ENCODE measurements at regions of chr1 and their contacts with region 1.

Region 1: DNA sequence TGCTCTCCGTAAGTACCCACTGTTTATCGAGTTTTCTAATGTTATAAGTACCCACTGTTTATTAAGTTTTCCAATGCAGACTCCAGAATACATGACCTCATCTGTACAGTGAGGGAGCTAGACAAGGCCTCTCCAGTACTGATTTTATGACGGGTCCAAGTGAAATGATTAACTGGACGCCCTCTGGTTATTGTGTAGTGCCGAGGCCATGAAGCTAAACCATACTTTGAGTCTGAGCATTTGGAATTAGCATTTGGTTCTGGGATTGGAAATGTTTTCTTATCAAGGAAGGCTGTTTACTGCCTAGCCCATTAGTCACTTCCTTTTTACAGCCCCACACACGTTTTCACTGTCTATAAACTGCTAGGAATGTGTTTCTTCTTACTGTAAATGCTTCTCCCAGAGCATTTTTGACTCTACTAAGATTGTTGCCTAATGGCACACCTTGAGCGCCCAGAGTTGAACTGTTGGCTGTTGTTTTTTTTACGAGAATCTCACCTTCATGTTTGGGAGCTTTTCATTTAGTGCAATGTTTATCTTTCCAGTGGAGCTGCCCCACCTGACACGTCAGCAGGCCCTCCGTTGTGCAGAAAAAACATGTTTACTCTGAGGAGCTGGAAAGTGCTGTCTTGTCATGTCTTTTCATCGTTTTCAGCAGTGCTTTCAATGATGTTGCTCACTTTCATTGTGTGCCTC is 26.9 kb downstream of the SPATA46 start:
- DNase-seq: peak; percentile 46 to 74
- H3K4me3 ChIP-seq: no peak overlapping the region
- H3K4me3 Mint-ChIP-seq: peak overlapping the region; percentile 33
- H3K27ac Mint-ChIP-seq: peak overlapping the region; percentile 74
- H3K4me1 ChIP-seq: peaks cover 56% of the 10 kb centered on the region
- H3K4me1 Mint-ChIP-seq: peaks cover 66% of the 10 kb centered on the region
- H3K27me3 ChIP-seq: no peaks in the 10 kb centered on the region
- H3K27me3 Mint-ChIP-seq: no peaks in the 10 kb centered on the region
- CTCF ChIP-seq: no peak

Region 2: GRCh38 chr1:162081316-162081715 is 268.5 kb before region 1 on chr1:
- CTCF ChIA-PET with region 1: no interaction called
- POLR2A ChIA-PET with region 1: no interaction called
- intact Hi-C with region 1: no loop called
- DNase-seq: no peak
- H3K4me3 ChIP-seq: no peak overlapping the region
- H3K4me3 Mint-ChIP-seq: no peak overlapping the region
- H3K27ac Mint-ChIP-seq: no peak overlapping the region
- H3K4me1 ChIP-seq: no peaks in the 10 kb centered on the region
- H3K4me1 Mint-ChIP-seq: peaks cover under 1% of the 10 kb centered on the region
- H3K27me3 ChIP-seq: no peaks in the 10 kb centered on the region
- H3K27me3 Mint-ChIP-seq: no peaks in the 10 kb centered on the region
- CTCF ChIP-seq: no peak

Region 3: GRCh38 chr1:162145280-162145965 is 204.4 kb before region 1 on chr1:
- CTCF ChIA-PET with region 1: no interaction called
- POLR2A ChIA-PET with region 1: no interaction called
- intact Hi-C with region 1: loop called (anchors 10 kb)
- DNase-seq: no peak
- H3K4me3 ChIP-seq: no peak overlapping the region
- H3K4me3 Mint-ChIP-seq: no peak overlapping the region
- H3K27ac Mint-ChIP-seq: no peak overlapping the region
- H3K4me1 ChIP-seq: peaks cover 27% of the 10 kb centered on the region
- H3K4me1 Mint-ChIP-seq: peaks cover 17% of the 10 kb centered on the region
- H3K27me3 ChIP-seq: no peaks in the 10 kb centered on the region
- H3K27me3 Mint-ChIP-seq: no peaks in the 10 kb centered on the region
- CTCF ChIP-seq: no peak

Region 4: GRCh38 chr1:162218975-162219374 is 130.8 kb before region 1 on chr1:
- CTCF ChIA-PET with region 1: no interaction called
- POLR2A ChIA-PET with region 1: no interaction called
- intact Hi-C with region 1: no loop called
- DNase-seq: no peak
- H3K4me3 ChIP-seq: no peak overlapping the region
- H3K4me3 Mint-ChIP-seq: no peak overlapping the region
- H3K27ac Mint-ChIP-seq: no peak overlapping the region
- H3K4me1 ChIP-seq: no peaks in the 10 kb centered on the region
- H3K4me1 Mint-ChIP-seq: peaks cover 22% of the 10 kb centered on the region
- H3K27me3 ChIP-seq: no peaks in the 10 kb centered on the region
- H3K27me3 Mint-ChIP-seq: no peaks in the 10 kb centered on the region
- CTCF ChIP-seq: no peak

Region 5: DNA sequence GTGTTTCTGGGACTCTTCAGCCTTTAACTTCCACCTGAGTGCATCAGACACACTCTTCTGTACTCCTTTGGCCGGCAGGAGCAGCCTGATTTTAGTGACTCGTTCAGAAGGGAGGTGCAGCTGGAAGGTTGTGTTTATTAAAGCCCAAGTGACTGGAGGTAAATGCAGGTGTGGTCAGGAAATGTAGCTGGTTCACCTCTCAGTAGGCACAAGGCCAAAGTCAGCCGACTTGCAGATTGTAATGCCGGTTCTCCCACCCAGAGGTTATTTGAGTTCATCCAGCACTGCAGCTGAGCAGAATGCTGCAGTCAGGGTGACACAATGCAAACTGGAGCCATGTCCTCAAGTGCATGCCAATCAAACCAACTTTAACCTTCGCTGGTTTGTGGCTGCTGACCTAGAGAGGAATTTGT is 64.6 kb before region 1 on chr1:
- CTCF ChIA-PET with region 1: no interaction called
- POLR2A ChIA-PET with region 1: no interaction called
- intact Hi-C with region 1: loop called (anchors 10 kb)
- DNase-seq: peak in 1 of 2 experiments; percentile 9
- H3K4me3 ChIP-seq: no peak overlapping the region
- H3K4me3 Mint-ChIP-seq: no peak overlapping the region
- H3K27ac Mint-ChIP-seq: no peak overlapping the region
- H3K4me1 ChIP-seq: no peaks in the 10 kb centered on the region
- H3K4me1 Mint-ChIP-seq: no peaks in the 10 kb centered on the region
- H3K27me3 ChIP-seq: peaks cover 1% of the 10 kb centered on the region; the same call in 1 of the 2 replicates
- H3K27me3 Mint-ChIP-seq: no peaks in the 10 kb centered on the region
- CTCF ChIP-seq: no peak

Region 6: DNA sequence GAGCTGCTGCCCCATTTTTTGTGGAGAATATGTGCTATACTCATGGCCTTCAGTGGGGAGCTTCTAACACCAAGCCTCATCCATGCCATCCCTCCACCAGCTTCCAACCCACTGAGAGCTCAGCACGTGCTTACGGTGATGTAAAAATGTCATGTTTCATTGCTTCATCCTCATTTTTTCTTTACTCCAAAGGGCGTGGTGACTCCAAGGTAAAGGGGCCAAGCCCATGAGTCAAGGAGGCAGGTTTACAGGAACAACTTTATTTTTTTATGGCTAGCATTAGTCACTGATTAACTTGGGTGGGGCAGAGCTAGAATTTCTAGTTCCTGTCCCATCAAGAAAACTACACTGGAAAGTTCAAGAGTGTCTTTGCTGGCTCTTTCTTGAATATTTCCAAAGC is 31.6 kb after region 1 on chr1 and contains the start of gene C1orf226:
- CTCF ChIA-PET with region 1: interaction called, 5 read pairs
- POLR2A ChIA-PET with region 1: no interaction called
- intact Hi-C with region 1: loop called (anchors 1 kb)
- DNase-seq: peak; percentile 83 to 85
- H3K4me3 ChIP-seq: no peak within 1 kb of the TSS
- H3K4me3 Mint-ChIP-seq: peak within 1 kb of the TSS; percentile 25
- H3K27ac Mint-ChIP-seq: peak within 1 kb of the TSS; percentile 93
- H3K4me1 ChIP-seq: peaks cover 39% of the 10 kb centered on the region
- H3K4me1 Mint-ChIP-seq: peaks cover 20% of the 10 kb centered on the region
- H3K27me3 ChIP-seq: no peaks in the 10 kb centered on the region
- H3K27me3 Mint-ChIP-seq: no peaks in the 10 kb centered on the region
- CTCF ChIP-seq: no peak
- total RNA-seq, gene C1orf226: 5.3 and 7.3 TPM in 2 replicates